Activated T-helper 2 cell treated with anti-CD3 and anti-CD28 coated beads, Interferon-gamma antibody, Interleukin-2, Interleukin-4, amounts not matched to agents 10 μg/mL and 5 μg/mL and 100 μg/mL, durations not matched to agents 14 hours and 24 hours and 36 hours (primary cell): ENCODE measurements at regions of chr16 and their contacts with region 1.

Region 1: DNA sequence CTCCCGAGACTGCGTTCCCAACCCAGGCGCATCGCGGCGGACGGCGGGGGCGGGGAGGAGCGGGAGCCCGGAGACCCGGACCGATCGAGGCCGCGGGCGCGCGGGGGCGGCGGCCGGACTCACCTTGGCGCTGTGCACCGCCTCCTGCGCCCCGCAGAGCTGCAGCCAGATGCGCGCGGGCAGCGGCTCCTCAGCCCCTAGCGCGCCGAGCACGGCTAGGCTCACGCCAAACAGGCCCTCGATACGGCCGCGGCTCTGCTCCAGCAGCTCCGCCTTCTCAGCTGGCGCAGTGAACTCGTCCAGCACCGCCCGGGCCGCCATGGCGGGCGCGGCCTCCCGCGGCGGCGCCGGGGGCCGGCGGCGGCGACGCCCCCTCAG is 339 bp downstream of the N4BP1 start:
- DNase-seq: no peak
- H3K4me3 Mint-ChIP-seq: peak overlapping the region; percentile 89
- H3K27ac Mint-ChIP-seq: peak overlapping the region; percentile 86
- H3K4me1 Mint-ChIP-seq: peaks cover 39% of the 10 kb centered on the region
- H3K27me3 Mint-ChIP-seq: no peaks in the 10 kb centered on the region

Region 2: DNA sequence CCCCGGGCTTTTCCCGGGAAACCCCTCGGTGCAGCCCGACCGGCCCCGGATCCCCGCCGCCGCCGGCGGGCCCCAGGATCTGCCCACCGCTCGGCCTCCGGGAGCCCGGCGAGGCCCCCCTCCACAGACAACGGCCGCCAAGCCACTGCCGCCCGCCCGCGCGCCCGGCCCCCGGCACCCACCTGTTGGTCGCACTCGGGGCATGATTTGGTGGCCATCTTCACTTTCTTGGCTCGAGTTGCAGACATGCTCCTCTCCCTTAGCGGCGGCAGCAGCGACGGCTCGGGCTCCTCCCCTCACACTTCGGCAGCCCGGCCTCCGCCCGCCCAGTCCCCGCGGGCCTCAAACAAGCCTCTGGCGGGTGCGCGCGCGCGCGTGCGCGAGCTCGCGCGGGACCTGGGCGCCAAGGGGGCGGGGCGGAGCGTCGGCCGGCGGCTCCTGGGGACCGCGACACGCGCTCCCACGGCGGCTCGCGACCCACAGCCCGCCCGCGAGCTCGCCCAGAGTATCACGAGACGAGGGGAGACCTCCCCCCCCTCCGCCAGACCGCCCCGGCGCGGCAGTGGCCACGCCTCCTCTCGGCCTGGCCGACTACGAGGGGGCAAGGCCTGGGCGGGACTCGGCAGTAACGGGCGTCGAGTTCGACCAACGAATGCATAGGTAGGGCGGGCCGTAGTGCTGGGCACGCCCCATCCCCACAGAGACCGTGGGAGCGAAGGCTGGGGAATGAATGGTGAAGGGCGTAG is 1778.6 kb before region 1 on chr16 and contains the start of gene C16orf87:
- intact Hi-C with region 1: loop called (anchors 5 kb)
- DNase-seq: peak; percentile 89
- H3K4me3 Mint-ChIP-seq: peak within 1 kb of the TSS; percentile 98
- H3K27ac Mint-ChIP-seq: peak within 1 kb of the TSS; percentile 99
- H3K4me1 Mint-ChIP-seq: peaks cover 31% of the 10 kb centered on the region
- H3K27me3 Mint-ChIP-seq: peaks cover 11% of the 10 kb centered on the region
- total RNA-seq, gene C16orf87: 20.1 and 24.0 TPM in 2 replicates

Region 3: GRCh38 chr16:48365581-48366164 is 244.0 kb before region 1 on chr16:
- intact Hi-C with region 1: loop called (anchors 2 kb)
- DNase-seq: peak; percentile 78
- H3K4me3 Mint-ChIP-seq: peak overlapping the region; percentile 89
- H3K27ac Mint-ChIP-seq: peak overlapping the region; percentile 95
- H3K4me1 Mint-ChIP-seq: peaks cover 53% of the 10 kb centered on the region
- H3K27me3 Mint-ChIP-seq: no peaks in the 10 kb centered on the region

Region 4: DNA sequence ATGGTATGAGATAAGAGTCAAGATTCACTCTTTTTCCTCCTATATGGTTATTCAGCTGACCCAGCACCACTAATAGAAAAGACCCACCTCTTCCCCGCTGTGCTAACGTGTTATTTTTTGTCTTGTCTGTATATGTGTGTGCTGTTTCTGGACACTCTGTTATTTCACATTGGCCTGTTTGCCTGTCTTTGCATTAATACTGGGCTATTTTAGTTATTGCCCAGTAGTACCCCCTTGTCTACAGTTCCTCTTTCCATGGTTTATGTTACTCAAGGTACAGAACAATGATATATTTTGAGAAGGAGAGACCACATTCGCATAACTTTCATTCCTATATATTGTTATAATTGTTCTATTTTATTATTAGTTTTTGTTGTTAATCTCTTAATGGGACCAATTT is 150.5 kb before region 1 on chr16:
- intact Hi-C with region 1: loop called (anchors 5 kb)
- DNase-seq: no peak
- H3K4me3 Mint-ChIP-seq: no peak overlapping the region
- H3K27ac Mint-ChIP-seq: no peak overlapping the region
- H3K4me1 Mint-ChIP-seq: peaks cover 15% of the 10 kb centered on the region
- H3K27me3 Mint-ChIP-seq: peaks cover 39% of the 10 kb centered on the region

Region 5: DNA sequence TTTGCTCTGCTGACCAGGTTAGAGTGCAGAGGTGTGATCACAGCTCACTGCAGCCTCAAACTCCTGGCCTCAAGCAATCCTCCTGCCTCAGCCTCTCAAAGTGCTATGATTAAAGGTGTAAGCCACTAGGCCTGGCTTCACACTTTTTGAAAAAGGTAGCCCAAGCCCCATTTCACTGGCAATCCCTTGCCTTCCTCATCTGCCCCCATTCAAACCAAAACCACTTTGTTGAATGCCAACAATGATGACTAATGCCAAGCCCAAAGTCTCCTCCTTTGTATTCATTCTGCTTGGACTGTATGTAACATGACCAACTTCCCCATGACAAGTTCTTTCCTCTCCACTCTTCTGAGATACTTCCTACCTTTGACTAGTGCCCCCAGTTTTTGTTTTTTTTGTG is 32.7 kb before region 1 on chr16:
- intact Hi-C with region 1: loop called (anchors 1 kb)
- DNase-seq: no peak
- H3K4me3 Mint-ChIP-seq: no peak overlapping the region
- H3K27ac Mint-ChIP-seq: peak overlapping the region; percentile 56
- H3K4me1 Mint-ChIP-seq: peaks cover 33% of the 10 kb centered on the region
- H3K27me3 Mint-ChIP-seq: no peaks in the 10 kb centered on the region

Region 6: DNA sequence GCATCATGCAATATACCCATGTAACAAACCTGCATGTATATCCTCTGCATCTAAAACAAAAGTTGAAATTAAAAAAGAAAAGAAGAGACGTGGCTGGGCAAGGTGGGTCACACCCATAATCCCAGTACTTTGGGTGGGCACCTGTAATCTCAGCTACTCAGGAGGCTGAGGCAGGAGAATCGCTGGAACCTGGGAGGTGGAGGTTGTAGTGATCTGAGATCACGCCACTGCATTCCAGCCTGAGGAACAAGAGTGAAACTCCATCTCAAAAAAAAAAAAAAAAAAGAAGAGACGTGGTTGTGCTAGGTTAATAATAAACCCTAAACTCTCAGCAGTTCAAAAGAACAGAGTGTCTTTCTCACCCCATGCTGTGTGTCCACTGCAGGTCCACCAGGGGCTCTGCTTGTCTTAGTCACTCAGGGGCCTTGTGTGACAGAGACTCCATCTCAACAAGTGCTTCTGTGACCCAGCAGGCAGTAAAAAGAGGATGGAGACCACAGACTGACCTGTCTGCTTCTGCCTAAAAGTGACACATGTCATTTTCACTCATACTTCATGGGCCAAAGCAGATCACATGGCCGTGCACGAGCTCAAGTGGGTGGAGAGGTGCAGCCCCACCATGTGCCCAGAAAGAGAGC is 22.6 kb after region 1 on chr16:
- intact Hi-C with region 1: loop called (anchors 2 kb)
- DNase-seq: no peak
- H3K4me3 Mint-ChIP-seq: no peak overlapping the region
- H3K27ac Mint-ChIP-seq: no peak overlapping the region
- H3K4me1 Mint-ChIP-seq: peaks cover 10% of the 10 kb centered on the region
- H3K27me3 Mint-ChIP-seq: peaks cover 2% of the 10 kb centered on the region